Uterus (tissue), 4 donors: ENCODE measurements at regions of chr14 and their contacts with region 1.

Region 1: DNA sequence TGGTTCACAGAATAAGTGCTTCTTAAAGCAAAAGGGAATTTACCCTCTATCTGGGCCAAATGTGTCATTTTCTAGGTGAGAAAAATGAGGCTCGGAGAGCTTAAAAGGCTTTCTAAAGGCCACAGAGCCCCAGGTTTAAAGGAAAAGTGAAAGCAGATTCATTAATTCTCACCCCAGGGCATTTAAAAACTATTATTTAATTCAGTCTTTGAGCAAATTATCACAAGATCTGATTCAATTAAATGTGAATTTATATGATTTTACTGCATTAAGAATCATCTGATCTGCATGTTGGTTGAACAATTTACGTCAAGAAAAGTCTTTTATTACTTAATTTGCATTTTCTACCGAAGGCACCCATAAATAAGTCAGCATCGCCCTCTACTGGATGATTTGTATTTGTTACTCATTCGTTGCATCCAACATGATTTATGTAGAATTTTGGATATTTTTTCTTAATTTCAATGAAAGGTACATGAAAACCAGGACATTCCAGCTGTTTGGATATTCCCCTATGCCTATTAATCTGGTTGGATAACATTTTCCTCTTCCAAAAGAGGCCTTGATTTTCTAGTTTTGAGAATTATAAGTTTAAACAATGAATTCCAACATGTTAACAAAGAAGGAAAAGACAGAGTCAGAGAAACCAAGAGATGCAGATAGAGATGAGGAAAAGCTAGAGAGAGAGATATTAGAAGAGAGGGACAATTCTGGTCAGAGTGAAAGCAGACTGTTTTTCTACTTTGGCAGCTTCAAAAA is 19.1 kb upstream of the DHRS7 start:
- DNase-seq: peak in 1 of 2 donors; percentile 38
- H3K4me3 ChIP-seq: peak overlapping the region; percentile 28 to 40
- H3K27ac ChIP-seq: peak overlapping the region; percentile 79 to 80
- H3K4me1 ChIP-seq: no peaks in the 10 kb centered on the region
- H3K27me3 ChIP-seq: no peaks in the 10 kb centered on the region
- CTCF ChIP-seq: peak; percentile 78 to 89 (median 80)
- POLR2A ChIP-seq: no peak

Region 2: GRCh38 chr14:59964251-59965007 is 219.9 kb before region 1 on chr14:
- intact Hi-C with region 1: loop called (anchors 10 kb)
- DNase-seq: no peak
- H3K4me3 ChIP-seq: no peak overlapping the region
- H3K27ac ChIP-seq: no peak overlapping the region
- H3K4me1 ChIP-seq: no peaks in the 10 kb centered on the region
- H3K27me3 ChIP-seq: no peaks in the 10 kb centered on the region
- CTCF ChIP-seq: no peak
- POLR2A ChIP-seq: no peak

Region 3: GRCh38 chr14:60064491-60065072 is 119.7 kb before region 1 on chr14:
- intact Hi-C with region 1: loop called (anchors 10 kb)
- DNase-seq: no peak
- H3K4me3 ChIP-seq: no peak overlapping the region
- H3K27ac ChIP-seq: no peak overlapping the region
- H3K4me1 ChIP-seq: no peaks in the 10 kb centered on the region
- H3K27me3 ChIP-seq: no peaks in the 10 kb centered on the region
- CTCF ChIP-seq: peak; percentile 50 to 67 (median 56)
- POLR2A ChIP-seq: no peak